Activated CD8-positive, alpha-beta T cell treated with anti-CD3 and anti-CD28 coated beads, Interleukin-2, amount 10 ng/mL, durations not matched to agents 7 days and 5 days (primary cell): ENCODE measurements at regions of chr19 and their contacts with region 1.

Region 1: GRCh38 chr19:8342684-8343482 is at the start of gene KANK3:
- DNase-seq: peak; percentile 96
- ATAC-seq: peak; percentile 100
- H3K4me3 Mint-ChIP-seq: peak within 1 kb of the TSS; percentile 77
- H3K27ac Mint-ChIP-seq: peak within 1 kb of the TSS; percentile 72
- H3K4me1 Mint-ChIP-seq: peaks cover 20% of the 10 kb centered on the region
- H3K27me3 Mint-ChIP-seq: peaks cover 24% of the 10 kb centered on the region
- total RNA-seq, gene KANK3: 3.4 to 3.5 TPM

Region 2: GRCh38 chr19:8321060-8321985 is 21.6 kb before region 1 on chr19 and contains the starts of genes NDUFA7 and RPS28:
- CTCF ChIA-PET with region 1: no interaction called
- POLR2A ChIA-PET with region 1: interaction called, 13 read pairs
- DNase-seq: peak; percentile 98
- ATAC-seq: peak; percentile 93
- H3K4me3 Mint-ChIP-seq: peak within 1 kb of the TSS; percentile 100
- H3K27ac Mint-ChIP-seq: peak within 1 kb of the TSS; percentile 100
- H3K4me1 Mint-ChIP-seq: peaks cover 47% of the 10 kb centered on the region
- H3K27me3 Mint-ChIP-seq: no peaks in the 10 kb centered on the region
- total RNA-seq, gene NDUFA7: 56.0 to 63.8 TPM
- total RNA-seq, gene RPS28: 1,476 to 1,561 TPM

Region 3: DNA sequence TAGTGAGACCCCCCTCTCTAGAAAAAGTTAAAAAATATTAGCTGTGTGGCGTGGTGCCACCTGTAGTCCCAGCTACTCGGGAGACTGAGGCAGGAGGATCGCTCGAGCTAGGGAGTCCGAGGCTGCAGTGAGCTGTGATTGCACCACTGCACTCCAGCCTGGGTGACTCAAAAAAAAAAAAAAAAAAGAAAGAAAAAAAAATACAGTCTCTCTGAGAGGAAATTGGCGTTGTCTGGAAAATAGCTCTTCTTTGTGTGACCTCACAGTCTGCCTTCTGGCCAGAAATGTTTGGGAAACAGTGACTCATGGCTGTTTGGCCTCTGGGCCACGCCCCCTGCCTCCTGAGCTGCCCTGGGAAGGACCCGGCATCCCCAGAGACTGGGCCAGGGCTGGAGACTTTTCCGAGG is 80.9 kb after region 1 on chr19:
- CTCF ChIA-PET with region 1: no interaction called
- POLR2A ChIA-PET with region 1: no interaction called
- DNase-seq: no peak
- ATAC-seq: no peak
- H3K4me3 Mint-ChIP-seq: no peak overlapping the region
- H3K27ac Mint-ChIP-seq: no peak overlapping the region
- H3K4me1 Mint-ChIP-seq: no peaks in the 10 kb centered on the region
- H3K27me3 Mint-ChIP-seq: no peaks in the 10 kb centered on the region